Dorsolateral prefrontal cortex (tissue), 120 donors: ENCODE measurements at regions of chr6 and their contacts with region 1.

Region 1: GRCh38 chr6:31546962-31547726 is at the start of gene NFKBIL1:
- DNase-seq: peak; percentile 91 to 98 (median 98)
- H3K4me3 ChIP-seq: peak within 1 kb of the TSS; percentile 29 to 82 (median 68)
- H3K27ac ChIP-seq: peak within 1 kb of the TSS; percentile 51 to 96 (median 90)
- H3K27me3 ChIP-seq: no peaks in the 10 kb centered on the region
- CTCF ChIP-seq: peak in 27 of 56 donors; percentile 1 to 55 (median 10)
- total RNA-seq, gene NFKBIL1: 13.8 to 27.3 (median 20.1) TPM

Region 2: GRCh38 chr6:31493875-31494694 is 53.1 kb before region 1 on chr6:
- intact Hi-C with region 1: no loop called
- DNase-seq: peak in 9 of 10 donors; percentile 28 to 85 (median 69)
- H3K4me3 ChIP-seq: peak overlapping the region; percentile 31 to 75 (median 56)
- H3K27ac ChIP-seq: peak overlapping the region in 42 of 59 donors; percentile 2 to 85 (median 54)
- H3K27me3 ChIP-seq: peaks cover 0 to 86% (median 23%) of the 10 kb centered on the region in 45 donors
- CTCF ChIP-seq: peak; percentile 13 to 75 (median 59)

Region 3: DNA sequence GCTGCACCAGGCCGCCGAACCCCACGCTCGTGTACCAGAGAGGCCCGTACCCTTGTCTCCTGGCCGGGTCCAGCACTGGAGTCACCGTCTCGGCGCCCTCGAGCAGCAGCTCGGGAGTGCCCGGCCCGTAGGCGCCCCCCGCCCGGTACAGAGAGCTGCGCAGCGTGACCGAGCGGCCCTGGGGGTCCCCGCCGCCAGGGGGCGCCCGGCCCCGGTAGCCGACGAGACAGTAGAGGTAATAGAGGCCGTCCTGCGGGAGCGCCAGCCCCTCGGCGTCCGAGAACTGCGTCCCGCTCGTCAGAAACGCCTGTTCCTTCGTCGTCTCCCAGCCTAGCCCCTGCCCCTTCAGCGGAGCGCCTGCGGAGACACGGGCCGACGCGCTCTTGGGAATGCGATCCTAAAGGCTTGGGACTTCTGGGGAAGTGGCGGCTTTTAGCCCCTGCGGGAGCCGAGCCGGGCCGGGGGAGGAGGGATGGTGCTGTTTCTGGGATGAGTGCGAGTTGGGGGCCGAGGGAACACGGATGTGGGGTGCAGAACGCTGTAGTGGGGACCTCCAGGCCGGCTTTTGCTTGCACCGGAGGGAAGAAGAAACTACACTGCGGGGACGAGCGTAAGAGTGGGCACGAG is 33.8 kb after region 1 on chr6:
- intact Hi-C with region 1: loop called in 1 of 2 experiments (anchors 5 kb)
- DNase-seq: peak; percentile 74 to 93 (median 88)
- H3K4me3 ChIP-seq: peak overlapping the region; percentile 44 to 99 (median 82)
- H3K27ac ChIP-seq: peak overlapping the region in 58 of 59 donors; percentile 5 to 93 (median 76)
- H3K27me3 ChIP-seq: no peaks in the 10 kb centered on the region
- CTCF ChIP-seq: peak; percentile 64 to 99 (median 97)

Region 4: DNA sequence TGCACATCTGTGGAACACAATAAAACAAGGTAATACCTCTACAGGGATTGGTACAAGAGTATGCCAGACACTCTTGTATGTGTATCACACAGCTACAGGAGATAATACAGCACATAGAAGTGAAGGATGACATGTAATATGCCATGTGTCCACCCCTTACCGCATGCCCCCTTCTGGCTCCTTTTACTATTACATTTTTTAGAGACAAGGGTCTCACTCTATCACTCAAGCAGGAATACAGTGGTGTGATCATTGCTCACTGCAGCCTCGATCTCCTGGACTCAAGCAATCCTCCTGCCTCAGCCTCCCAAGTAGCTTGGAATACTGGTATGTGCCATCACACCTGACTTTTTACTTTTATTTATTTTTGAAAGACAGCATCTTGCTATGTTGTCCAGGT is 49.9 kb after region 1 on chr6:
- intact Hi-C with region 1: loop called (anchors 1 to 2 kb)
- DNase-seq: no peak
- H3K4me3 ChIP-seq: no peak overlapping the region
- H3K27ac ChIP-seq: no peak overlapping the region
- H3K27me3 ChIP-seq: no peaks in the 10 kb centered on the region
- CTCF ChIP-seq: peak in 39 of 56 donors; percentile 7 to 50 (median 30)

Region 5: DNA sequence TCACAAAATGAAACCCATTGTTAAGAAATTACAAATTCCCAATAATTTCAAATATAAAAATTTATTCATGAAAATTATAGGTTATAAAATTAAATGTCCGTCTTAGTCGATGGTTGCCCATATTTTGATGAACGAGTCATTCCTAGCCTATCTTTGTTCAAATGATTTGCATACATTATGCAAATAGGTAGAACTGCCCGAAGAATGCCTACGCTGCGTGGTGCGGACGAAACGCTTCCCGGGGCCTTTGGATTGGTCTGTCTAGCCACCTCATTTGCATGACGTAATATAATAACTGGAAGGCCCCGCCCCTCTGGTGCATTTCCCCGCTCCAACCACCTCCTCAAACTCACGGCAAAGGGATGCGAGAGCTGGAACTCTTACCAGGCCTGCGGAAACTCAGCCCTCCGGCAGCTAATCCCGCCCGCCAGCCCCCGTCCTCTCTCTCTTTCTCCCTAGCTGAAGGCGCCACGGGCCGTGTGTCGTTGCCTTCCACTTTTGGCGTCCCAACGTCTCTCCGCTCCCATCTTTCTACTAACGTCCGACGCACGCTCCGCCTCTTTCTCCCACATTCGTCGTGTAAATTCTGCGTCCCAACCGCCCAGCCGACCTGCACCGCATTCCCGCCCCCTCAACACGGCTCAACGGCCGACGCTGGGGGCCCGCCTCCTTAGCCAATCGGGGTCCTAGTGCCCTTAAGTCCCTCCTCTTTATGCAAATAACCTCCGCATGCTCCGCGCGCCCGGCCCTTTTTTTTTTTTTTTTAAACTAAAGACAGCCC is 72.9 kb after region 1 on chr6:
- intact Hi-C with region 1: loop called in 1 of 2 experiments (anchors 2 kb)
- DNase-seq: peak; percentile 89 to 99 (median 98)
- H3K4me3 ChIP-seq: peak overlapping the region; percentile 61 to 95 (median 81)
- H3K27ac ChIP-seq: peak overlapping the region; percentile 51 to 100 (median 97)
- H3K27me3 ChIP-seq: no peaks in the 10 kb centered on the region
- CTCF ChIP-seq: peak in 6 of 56 donors; percentile 8 to 28 (median 14)

Region 6: DNA sequence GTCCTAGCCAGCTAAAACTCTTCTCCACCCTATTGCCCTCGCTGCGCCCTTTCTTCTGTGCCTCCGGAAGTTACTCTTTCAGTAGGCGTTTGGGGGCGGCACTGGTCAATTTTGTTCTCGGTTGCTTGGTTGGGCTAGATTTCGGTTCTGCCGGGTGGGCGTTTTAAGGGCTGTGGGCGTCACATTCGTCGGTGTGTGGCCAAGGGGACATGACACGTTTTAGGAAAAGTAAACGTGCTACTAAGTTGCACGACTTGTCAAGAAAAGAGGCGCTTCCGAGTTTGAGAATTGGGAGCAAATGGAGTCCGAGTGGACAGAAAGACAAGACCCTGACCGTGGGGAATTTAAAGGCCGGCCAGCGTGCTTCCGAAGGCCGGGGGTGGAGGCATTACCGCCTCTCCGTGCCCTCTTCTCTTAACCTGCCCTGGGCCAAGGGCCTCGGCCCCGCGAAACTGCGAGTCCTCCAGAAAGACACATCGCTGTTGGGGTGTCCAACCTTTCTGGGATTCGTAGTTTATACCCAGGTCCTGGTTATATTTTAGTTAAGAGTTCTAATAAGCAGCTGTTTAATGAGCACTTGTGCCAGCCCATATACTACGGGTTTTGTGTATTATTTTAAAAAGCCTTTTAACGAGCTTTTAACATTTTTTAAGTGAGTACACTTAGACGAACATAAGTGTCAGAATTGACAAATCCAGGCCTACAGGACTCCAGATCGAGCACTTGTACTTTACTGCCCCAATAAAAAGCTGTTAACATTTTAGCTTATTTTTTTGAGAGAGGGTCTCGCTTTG is 106.0 kb after region 1 on chr6:
- intact Hi-C with region 1: loop called in 1 of 2 experiments (anchors 2 kb)
- DNase-seq: peak; percentile 64 to 89 (median 86)
- H3K4me3 ChIP-seq: peak overlapping the region; percentile 62 to 100 (median 83)
- H3K27ac ChIP-seq: peak overlapping the region; percentile 84 to 100 (median 99)
- H3K27me3 ChIP-seq: no peaks in the 10 kb centered on the region
- CTCF ChIP-seq: peak in 20 of 56 donors; percentile 6 to 46 (median 23)

Region 7: GRCh38 chr6:31712296-31712695 is 165.2 kb after region 1 on chr6:
- intact Hi-C with region 1: no loop called
- DNase-seq: no peak
- H3K4me3 ChIP-seq: no peak overlapping the region
- H3K27ac ChIP-seq: no peak overlapping the region
- H3K27me3 ChIP-seq: no peaks in the 10 kb centered on the region
- CTCF ChIP-seq: no peak

Region 8: GRCh38 chr6:31952140-31952805 is 405.1 kb after region 1 on chr6:
- intact Hi-C with region 1: loop called in 1 of 2 experiments (anchors 5 kb)
- DNase-seq: peak in 8 of 10 donors; percentile 38 to 72 (median 50)
- H3K4me3 ChIP-seq: no peak overlapping the region
- H3K27ac ChIP-seq: peak overlapping the region in 9 of 59 donors; percentile 1 to 60 (median 32)
- H3K27me3 ChIP-seq: no peaks in the 10 kb centered on the region
- CTCF ChIP-seq: peak; percentile 41 to 82 (median 70)